ENCODE measurements at regions of chr17 and their contacts with region 1.

Region 1: GRCh38 chr17:50904521-50905459 is 38.6 kb upstream of the TOB1 start:
- DNase-seq: peak; percentile 83 to 86
- H3K4me3 ChIP-seq: peak overlapping the region; percentile 11
- H3K4me3 Mint-ChIP-seq: peak overlapping the region; percentile 51
- H3K27ac Mint-ChIP-seq: peak overlapping the region; percentile 87
- H3K4me1 ChIP-seq: peaks cover 48% of the 10 kb centered on the region
- H3K4me1 Mint-ChIP-seq: peaks cover 46% of the 10 kb centered on the region
- H3K27me3 ChIP-seq: no peaks in the 10 kb centered on the region
- H3K27me3 Mint-ChIP-seq: no peaks in the 10 kb centered on the region
- CTCF ChIP-seq: peak; percentile 1 to 26

Region 2: GRCh38 chr17:50798424-50799288 is 106.1 kb before region 1 on chr17:
- CTCF ChIA-PET with region 1: no interaction called
- POLR2A ChIA-PET with region 1: no interaction called
- intact Hi-C with region 1: no loop called
- DNase-seq: peak; percentile 56 to 65
- H3K4me3 ChIP-seq: no peak overlapping the region
- H3K4me3 Mint-ChIP-seq: no peak overlapping the region
- H3K27ac Mint-ChIP-seq: no peak overlapping the region
- H3K4me1 ChIP-seq: peaks cover 10% of the 10 kb centered on the region; the same call in 1 of the 2 replicates
- H3K4me1 Mint-ChIP-seq: peaks cover 7% of the 10 kb centered on the region
- H3K27me3 ChIP-seq: no peaks in the 10 kb centered on the region
- H3K27me3 Mint-ChIP-seq: no peaks in the 10 kb centered on the region
- CTCF ChIP-seq: no peak

Region 3: DNA sequence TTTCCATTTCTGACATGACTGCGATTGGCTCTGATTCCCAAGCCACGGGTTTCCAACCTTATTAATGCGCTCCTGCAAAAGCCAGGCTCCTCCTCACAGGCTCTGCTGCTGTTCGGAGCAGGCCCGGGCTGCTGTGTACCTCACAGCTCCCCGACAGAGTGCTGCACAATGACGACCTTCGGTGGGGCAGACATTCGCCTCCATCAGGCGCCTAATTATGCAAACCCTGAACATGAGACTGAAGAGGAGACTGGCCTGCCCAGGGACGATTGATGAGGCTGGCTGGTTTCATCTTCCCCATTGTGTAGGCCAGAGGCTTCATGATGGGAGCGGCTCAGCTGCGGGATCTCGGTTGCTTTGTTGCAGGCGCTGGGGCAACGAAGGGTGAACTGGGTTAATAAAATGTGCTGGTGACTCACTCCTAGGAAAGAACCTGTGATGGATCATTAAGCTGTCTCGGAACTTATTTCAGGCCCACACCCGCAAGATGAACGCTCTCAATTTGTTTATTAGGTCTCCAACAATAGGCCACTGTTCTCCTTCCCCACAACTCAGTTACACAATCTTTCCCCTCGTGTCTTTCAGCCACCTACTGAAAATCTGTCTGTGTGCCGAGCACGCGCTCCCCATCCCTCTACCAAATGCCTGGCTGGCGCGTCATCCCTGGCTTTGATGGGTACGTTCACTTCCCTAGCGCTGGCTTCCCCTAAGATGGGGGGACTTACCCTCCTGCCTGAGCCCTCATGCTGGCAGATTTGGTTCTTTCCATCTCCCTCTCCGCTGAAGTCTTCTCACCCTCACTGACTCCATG is 11.4 kb before region 1 on chr17:
- CTCF ChIA-PET with region 1: interaction called, 4 read pairs
- POLR2A ChIA-PET with region 1: interaction called, 16 read pairs
- intact Hi-C with region 1: no loop called
- DNase-seq: peak; percentile 56 to 70
- H3K4me3 ChIP-seq: no peak overlapping the region
- H3K4me3 Mint-ChIP-seq: peak overlapping the region; percentile 1
- H3K27ac Mint-ChIP-seq: peak overlapping the region; percentile 72
- H3K4me1 ChIP-seq: peaks cover 58% of the 10 kb centered on the region
- H3K4me1 Mint-ChIP-seq: peaks cover 68% of the 10 kb centered on the region
- H3K27me3 ChIP-seq: no peaks in the 10 kb centered on the region
- H3K27me3 Mint-ChIP-seq: no peaks in the 10 kb centered on the region
- CTCF ChIP-seq: no peak

Region 4: GRCh38 chr17:50918933-50919296 is 14.1 kb after region 1 on chr17:
- CTCF ChIA-PET with region 1: interaction called, 6 read pairs
- POLR2A ChIA-PET with region 1: interaction called, 5 read pairs
- intact Hi-C with region 1: loop called (anchors 1 kb)
- DNase-seq: no peak
- H3K4me3 ChIP-seq: no peak overlapping the region
- H3K4me3 Mint-ChIP-seq: no peak overlapping the region
- H3K27ac Mint-ChIP-seq: no peak overlapping the region
- H3K4me1 ChIP-seq: peaks cover 56% of the 10 kb centered on the region
- H3K4me1 Mint-ChIP-seq: peaks cover 23% of the 10 kb centered on the region
- H3K27me3 ChIP-seq: no peaks in the 10 kb centered on the region
- H3K27me3 Mint-ChIP-seq: no peaks in the 10 kb centered on the region
- CTCF ChIP-seq: no peak

Region 5: GRCh38 chr17:50931144-50931908 is 26.5 kb after region 1 on chr17:
- CTCF ChIA-PET with region 1: interaction called, 5 read pairs
- POLR2A ChIA-PET with region 1: interaction called, 18 read pairs
- intact Hi-C with region 1: loop called (anchors 1 kb)
- DNase-seq: peak; percentile 92
- H3K4me3 ChIP-seq: peak overlapping the region; percentile 44
- H3K4me3 Mint-ChIP-seq: peak overlapping the region; percentile 78
- H3K27ac Mint-ChIP-seq: peak overlapping the region; percentile 89
- H3K4me1 ChIP-seq: peaks cover 28% of the 10 kb centered on the region
- H3K4me1 Mint-ChIP-seq: peaks cover 29% of the 10 kb centered on the region
- H3K27me3 ChIP-seq: no peaks in the 10 kb centered on the region
- H3K27me3 Mint-ChIP-seq: no peaks in the 10 kb centered on the region
- CTCF ChIP-seq: no peak

Region 6: DNA sequence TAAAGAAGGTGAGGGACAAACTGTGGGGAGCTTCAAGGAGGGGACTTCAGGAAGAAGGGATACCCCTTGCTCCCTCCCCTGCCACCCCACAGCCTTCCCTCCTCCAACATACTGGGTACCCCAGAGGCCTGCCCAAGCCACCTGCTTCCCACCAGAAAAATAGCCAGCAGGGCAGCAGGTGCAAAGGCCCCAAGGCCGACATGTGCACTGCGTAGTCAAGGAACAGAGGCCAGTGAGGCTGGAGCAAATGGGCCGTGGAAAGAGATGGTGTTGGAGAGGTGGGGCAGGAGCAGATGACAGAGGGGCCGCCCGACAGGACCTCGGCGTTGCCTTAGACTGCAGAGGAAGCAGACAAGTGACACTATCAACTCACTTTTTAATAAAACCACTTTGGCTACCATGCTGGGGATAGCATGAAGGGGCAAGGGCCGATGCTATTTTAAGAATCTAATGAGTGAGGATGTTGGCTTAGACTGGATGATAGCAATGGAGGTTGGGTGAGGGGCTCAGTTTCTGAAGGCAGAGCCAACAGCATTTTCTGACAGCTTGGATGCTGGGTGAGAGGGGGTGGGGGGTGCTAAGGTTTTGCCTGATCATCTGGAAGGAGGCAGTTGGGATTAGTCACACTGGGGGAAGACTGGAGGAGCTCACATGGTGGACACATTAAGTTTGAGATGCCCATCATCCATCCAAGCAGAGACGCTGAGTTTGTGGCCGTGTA is 34.2 kb after region 1 on chr17:
- CTCF ChIA-PET with region 1: interaction called, 10 read pairs
- POLR2A ChIA-PET with region 1: interaction called, 12 read pairs
- intact Hi-C with region 1: loop called (anchors 1 kb)
- DNase-seq: no peak
- H3K4me3 ChIP-seq: no peak overlapping the region
- H3K4me3 Mint-ChIP-seq: no peak overlapping the region
- H3K27ac Mint-ChIP-seq: peak overlapping the region; percentile 34
- H3K4me1 ChIP-seq: peaks cover 22% of the 10 kb centered on the region
- H3K4me1 Mint-ChIP-seq: peaks cover 26% of the 10 kb centered on the region
- H3K27me3 ChIP-seq: no peaks in the 10 kb centered on the region
- H3K27me3 Mint-ChIP-seq: no peaks in the 10 kb centered on the region
- CTCF ChIP-seq: no peak

Region 7: GRCh38 chr17:50944054-50944901 is 39.5 kb after region 1 on chr17:
- CTCF ChIA-PET with region 1: interaction called, 10 read pairs
- POLR2A ChIA-PET with region 1: interaction called, 27 read pairs
- intact Hi-C with region 1: loop called (anchors 1 kb)
- DNase-seq: peak; percentile 96 to 98
- H3K4me3 ChIP-seq: peak overlapping the region; percentile 52
- H3K4me3 Mint-ChIP-seq: peak overlapping the region; percentile 73
- H3K27ac Mint-ChIP-seq: peak overlapping the region; percentile 59
- H3K4me1 ChIP-seq: peaks cover 27% of the 10 kb centered on the region
- H3K4me1 Mint-ChIP-seq: peaks cover 29% of the 10 kb centered on the region
- H3K27me3 ChIP-seq: no peaks in the 10 kb centered on the region
- H3K27me3 Mint-ChIP-seq: no peaks in the 10 kb centered on the region
- CTCF ChIP-seq: peak; percentile 53 to 60

Region 8: GRCh38 chr17:50949989-50950881 is 45.4 kb after region 1 on chr17:
- CTCF ChIA-PET with region 1: interaction called, 10 read pairs
- POLR2A ChIA-PET with region 1: interaction called, 27 read pairs
- intact Hi-C with region 1: loop called (anchors 1 kb)
- DNase-seq: peak; percentile 90 to 93
- H3K4me3 ChIP-seq: no peak overlapping the region
- H3K4me3 Mint-ChIP-seq: peak overlapping the region; percentile 32
- H3K27ac Mint-ChIP-seq: peak overlapping the region; percentile 16
- H3K4me1 ChIP-seq: peaks cover 29% of the 10 kb centered on the region
- H3K4me1 Mint-ChIP-seq: peaks cover 31% of the 10 kb centered on the region
- H3K27me3 ChIP-seq: no peaks in the 10 kb centered on the region
- H3K27me3 Mint-ChIP-seq: no peaks in the 10 kb centered on the region
- CTCF ChIP-seq: peak; percentile 99

Measured in Caco-2 (cell line).